ENCODE measurements at regions of chr2 and their contacts with region 1.

Region 1: GRCh38 chr2:143155661-143156060 is 26.4 kb downstream of the ARHGAP15 start:
- DNase-seq: no peak
- ATAC-seq: no peak
- H3K4me3 Mint-ChIP-seq: no peak overlapping the region
- H3K27ac Mint-ChIP-seq: peak overlapping the region; percentile 70
- H3K4me1 Mint-ChIP-seq: peaks cover 92% of the 10 kb centered on the region
- H3K27me3 Mint-ChIP-seq: no peaks in the 10 kb centered on the region
- CTCF ChIP-seq: no peak

Region 2: DNA sequence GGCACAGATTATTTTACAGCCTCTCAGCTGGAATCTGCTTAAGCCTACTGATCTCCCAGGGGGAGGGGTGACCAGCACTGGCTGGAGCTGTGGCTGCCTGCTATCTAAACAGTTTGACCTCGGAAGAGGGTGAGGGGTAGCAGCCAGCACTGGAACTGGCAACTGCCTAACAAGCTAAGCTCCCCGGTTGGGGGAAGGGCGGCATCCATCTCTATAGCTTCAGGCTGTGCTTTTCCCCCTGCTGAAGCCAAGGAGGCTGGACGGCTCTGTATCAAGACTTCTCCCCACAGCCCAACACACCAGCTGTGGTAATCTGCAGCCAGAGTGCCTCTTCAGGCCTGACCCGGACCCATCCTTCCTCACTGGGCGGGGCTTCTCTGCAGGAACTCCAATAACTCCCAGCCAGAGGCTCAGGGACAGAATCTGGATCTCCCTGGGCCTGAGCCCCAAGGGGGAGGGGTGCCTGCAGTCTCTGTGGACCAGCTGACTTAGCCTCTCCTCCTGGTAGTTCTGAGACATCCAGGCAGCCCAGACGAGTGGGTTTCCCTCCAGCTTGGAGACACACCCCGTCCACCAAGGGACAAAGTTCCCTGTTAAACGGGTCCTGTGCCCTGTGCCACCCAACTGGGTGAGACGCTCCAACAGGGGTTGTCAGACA is 1585.1 kb before region 1 on chr2:
- CTCF ChIA-PET with region 1: no interaction called
- POLR2A ChIA-PET with region 1: no interaction called
- intact Hi-C with region 1: no loop called
- DNase-seq: no peak
- ATAC-seq: no peak
- H3K4me3 Mint-ChIP-seq: no peak overlapping the region
- H3K27ac Mint-ChIP-seq: no peak overlapping the region
- H3K4me1 Mint-ChIP-seq: no peaks in the 10 kb centered on the region
- H3K27me3 Mint-ChIP-seq: no peaks in the 10 kb centered on the region
- CTCF ChIP-seq: no peak

Region 3: DNA sequence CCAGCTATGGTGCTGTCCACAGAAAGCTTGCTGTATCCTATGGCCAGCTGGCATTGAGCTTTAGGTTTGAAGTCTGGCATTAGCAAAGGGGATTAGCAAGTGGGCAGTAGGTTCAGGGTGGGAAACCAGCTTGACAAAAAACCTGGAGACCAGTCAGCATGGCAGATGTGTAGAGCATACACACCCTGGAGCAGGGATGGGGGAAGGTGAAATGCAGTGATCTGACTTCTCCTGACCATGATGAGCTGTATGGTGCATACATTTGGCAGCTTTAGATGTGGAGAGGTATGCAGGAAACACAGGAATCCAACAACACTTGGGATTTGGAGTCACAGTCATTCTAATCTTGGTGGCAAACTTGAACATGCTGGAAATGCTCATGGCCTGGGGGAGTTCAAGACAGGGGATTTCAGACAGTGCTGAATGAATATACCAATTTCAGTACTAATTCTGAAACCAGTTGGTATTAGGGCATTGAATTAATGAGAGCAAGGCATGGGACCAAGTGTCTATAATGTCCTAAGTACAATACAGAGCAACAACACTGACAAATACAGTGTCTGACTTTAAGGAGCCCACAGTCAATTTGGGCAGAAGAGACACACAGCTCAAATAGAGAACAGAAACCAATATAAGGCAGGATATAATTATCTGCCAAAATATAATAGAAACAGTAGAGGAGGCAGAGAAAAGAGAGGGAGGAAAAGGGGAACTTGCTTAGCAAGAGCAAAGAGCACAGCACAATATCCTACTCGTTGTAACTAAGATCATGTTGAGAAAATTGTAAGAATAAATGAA is 14.6 kb before region 1 on chr2:
- CTCF ChIA-PET with region 1: no interaction called
- POLR2A ChIA-PET with region 1: interaction called, 9 read pairs
- intact Hi-C with region 1: loop called (anchors 1 kb)
- DNase-seq: no peak
- ATAC-seq: peak; percentile 91
- H3K4me3 Mint-ChIP-seq: peak overlapping the region; percentile 56
- H3K27ac Mint-ChIP-seq: peak overlapping the region; percentile 89
- H3K4me1 Mint-ChIP-seq: peaks cover 92% of the 10 kb centered on the region
- H3K27me3 Mint-ChIP-seq: no peaks in the 10 kb centered on the region
- CTCF ChIP-seq: no peak